PC-3 (cell line): ENCODE measurements at regions of chr6 and their contacts with region 1.

Region 1: GRCh38 chr6:154510143-154510905 is at the start of gene CNKSR3:
- DNase-seq: peak; percentile 88
- ATAC-seq: peak; percentile 75
- H3K4me3 ChIP-seq: peak within 1 kb of the TSS; percentile 84
- H3K27ac ChIP-seq: peak within 1 kb of the TSS; percentile 61
- H3K4me1 ChIP-seq: peaks cover 11% of the 10 kb centered on the region
- H3K27me3 ChIP-seq: no peaks in the 10 kb centered on the region
- CTCF ChIP-seq: no peak
- total RNA-seq, gene CNKSR3: 1.6 and 3.2 TPM in 2 replicates

Region 2: DNA sequence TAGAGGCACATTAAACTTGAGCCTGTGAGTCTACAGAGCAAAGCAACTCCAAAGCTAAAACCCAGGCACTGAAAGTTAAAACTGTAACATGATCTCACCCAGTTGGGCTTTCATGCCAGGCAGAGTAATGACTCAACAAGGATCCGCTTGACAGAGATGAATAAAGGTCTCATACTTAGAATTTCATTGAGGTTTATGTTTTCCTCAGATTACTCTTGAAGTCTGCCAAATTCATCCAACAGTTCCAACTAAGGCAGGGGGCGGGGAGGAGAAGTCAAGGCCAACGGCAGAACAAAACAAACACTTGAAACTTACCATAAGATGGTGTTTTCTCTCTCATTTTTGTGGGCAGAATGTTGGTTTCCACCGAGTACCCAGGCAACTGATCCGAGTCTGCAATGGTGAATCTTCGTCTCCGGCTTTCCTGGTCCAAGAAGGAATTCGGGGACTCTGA is 99.7 kb before region 1 on chr6:
- CTCF ChIA-PET with region 1: no interaction called
- POLR2A ChIA-PET with region 1: no interaction called
- intact Hi-C with region 1: loop called (anchors 2 kb)
- DNase-seq: peak; percentile 90
- ATAC-seq: peak; percentile 91
- H3K4me3 ChIP-seq: peak overlapping the region; percentile 47; the same call in 1 of the 2 replicates
- H3K27ac ChIP-seq: peak overlapping the region; percentile 81
- H3K4me1 ChIP-seq: peaks cover 20% of the 10 kb centered on the region
- H3K27me3 ChIP-seq: no peaks in the 10 kb centered on the region
- CTCF ChIP-seq: no peak

Region 3: GRCh38 chr6:154457881-154458284 is 52.4 kb before region 1 on chr6:
- CTCF ChIA-PET with region 1: no interaction called
- POLR2A ChIA-PET with region 1: no interaction called
- intact Hi-C with region 1: loop called (anchors 1 kb)
- DNase-seq: peak; percentile 64
- ATAC-seq: peak; percentile 97
- H3K4me3 ChIP-seq: no peak overlapping the region
- H3K27ac ChIP-seq: no peak overlapping the region
- H3K4me1 ChIP-seq: peaks cover 17% of the 10 kb centered on the region
- H3K27me3 ChIP-seq: no peaks in the 10 kb centered on the region
- CTCF ChIP-seq: peak; percentile 52

Region 4: GRCh38 chr6:154613137-154613676 is 102.9 kb after region 1 on chr6:
- CTCF ChIA-PET with region 1: no interaction called
- POLR2A ChIA-PET with region 1: no interaction called
- intact Hi-C with region 1: loop called (anchors 2 kb)
- DNase-seq: peak; percentile 45
- ATAC-seq: peak; percentile 70
- H3K4me3 ChIP-seq: no peak overlapping the region
- H3K27ac ChIP-seq: peak overlapping the region; percentile 43
- H3K4me1 ChIP-seq: peaks cover 14% of the 10 kb centered on the region; the same call in 1 of the 2 replicates
- H3K27me3 ChIP-seq: no peaks in the 10 kb centered on the region
- CTCF ChIP-seq: no peak

Region 5: GRCh38 chr6:154675602-154676088 is 165.3 kb after region 1 on chr6:
- CTCF ChIA-PET with region 1: no interaction called
- POLR2A ChIA-PET with region 1: no interaction called
- intact Hi-C with region 1: loop called (anchors 10 kb)
- DNase-seq: peak; percentile 96
- ATAC-seq: peak; percentile 99
- H3K4me3 ChIP-seq: no peak overlapping the region
- H3K27ac ChIP-seq: no peak overlapping the region
- H3K4me1 ChIP-seq: no peaks in the 10 kb centered on the region
- H3K27me3 ChIP-seq: no peaks in the 10 kb centered on the region
- CTCF ChIP-seq: peak; percentile 99